ENCODE measurements at regions of chr1 and their contacts with region 1.

Region 1: DNA sequence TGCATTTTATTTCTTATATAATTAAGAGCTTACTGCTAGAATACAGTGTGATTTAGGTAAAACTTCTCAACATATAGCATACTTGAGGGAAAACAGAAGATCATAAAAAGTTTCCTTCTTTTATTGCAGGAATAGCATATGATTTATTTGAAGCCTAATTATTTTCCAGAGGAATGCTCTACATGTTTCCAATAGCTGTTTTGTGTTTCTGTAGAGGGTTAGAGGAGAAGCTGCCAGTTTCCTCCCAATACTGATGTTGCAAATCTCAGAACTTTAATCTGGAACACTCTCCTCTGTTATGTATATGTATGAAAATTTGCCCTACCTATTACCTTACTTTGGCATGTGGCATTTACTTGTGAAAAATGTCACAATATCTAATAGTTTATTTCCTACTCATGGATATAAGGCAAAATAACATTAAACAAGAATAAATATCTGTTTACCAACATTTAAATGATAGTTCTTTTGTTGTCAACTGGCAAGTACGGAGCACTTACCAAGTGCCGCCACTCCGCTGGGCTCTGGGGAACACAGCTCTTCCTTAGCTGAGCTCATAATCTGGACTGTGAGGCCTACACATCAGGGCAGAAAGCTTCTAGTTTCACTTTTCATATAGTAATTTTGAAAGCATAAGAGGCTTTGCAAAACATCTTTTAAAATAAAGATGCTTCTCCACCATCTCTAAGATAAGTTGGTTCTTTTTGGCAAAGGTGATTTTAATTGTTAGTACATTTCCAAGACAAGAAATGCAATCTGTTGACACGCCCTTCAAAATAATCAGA is 239.8 kb upstream of the C1orf105 start:
- DNase-seq: peak; percentile 63
- H3K4me3 Mint-ChIP-seq: peak overlapping the region; percentile 67
- H3K27ac Mint-ChIP-seq: peak overlapping the region; percentile 89
- H3K4me1 Mint-ChIP-seq: peaks cover 40% of the 10 kb centered on the region
- H3K27me3 Mint-ChIP-seq: no peaks in the 10 kb centered on the region

Region 2: GRCh38 chr1:171841050-171841940 is 339.4 kb before region 1 on chr1 and contains the start of gene DNM3:
- CTCF ChIA-PET with region 1: no interaction called
- intact Hi-C with region 1: no loop called
- DNase-seq: peak; percentile 66
- H3K4me3 Mint-ChIP-seq: peak within 1 kb of the TSS; percentile 79
- H3K27ac Mint-ChIP-seq: no peak within 1 kb of the TSS
- H3K4me1 Mint-ChIP-seq: peaks cover 14% of the 10 kb centered on the region
- H3K27me3 Mint-ChIP-seq: peaks cover 13% of the 10 kb centered on the region
- total RNA-seq, gene DNM3: 0.96 to 0.98 TPM

Region 3: DNA sequence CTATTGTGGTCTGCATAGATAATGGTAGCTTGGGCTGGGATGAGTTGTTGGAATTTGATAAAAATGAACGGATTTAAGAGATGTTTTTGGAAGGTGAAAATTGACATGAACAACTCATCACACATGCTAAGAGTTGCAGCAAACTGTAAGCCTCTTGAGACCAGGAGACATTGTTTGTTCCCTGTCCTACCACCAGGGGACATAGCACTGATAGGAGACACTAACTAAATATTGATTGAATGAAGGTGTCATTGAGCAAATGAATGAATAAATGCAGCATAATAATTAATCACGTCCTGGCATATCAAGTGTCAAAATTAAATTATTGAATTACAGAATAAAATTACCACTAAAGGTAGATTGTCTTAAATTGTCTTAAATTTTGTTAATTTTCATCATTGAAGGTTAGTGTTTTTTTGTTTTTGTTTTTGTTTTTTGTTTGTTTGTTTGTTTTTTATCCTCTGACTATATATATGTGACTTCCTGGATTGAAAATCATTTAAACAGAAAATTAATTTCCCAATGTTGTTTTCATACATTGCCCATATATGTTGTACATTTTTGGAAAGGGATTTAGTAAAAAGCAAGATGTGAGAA is 45.5 kb before region 1 on chr1:
- CTCF ChIA-PET with region 1: no interaction called
- intact Hi-C with region 1: loop called (anchors 1 kb)
- DNase-seq: peak; percentile 43
- H3K4me3 Mint-ChIP-seq: no peak overlapping the region
- H3K27ac Mint-ChIP-seq: no peak overlapping the region
- H3K4me1 Mint-ChIP-seq: peaks cover 17% of the 10 kb centered on the region
- H3K27me3 Mint-ChIP-seq: no peaks in the 10 kb centered on the region

Region 4: DNA sequence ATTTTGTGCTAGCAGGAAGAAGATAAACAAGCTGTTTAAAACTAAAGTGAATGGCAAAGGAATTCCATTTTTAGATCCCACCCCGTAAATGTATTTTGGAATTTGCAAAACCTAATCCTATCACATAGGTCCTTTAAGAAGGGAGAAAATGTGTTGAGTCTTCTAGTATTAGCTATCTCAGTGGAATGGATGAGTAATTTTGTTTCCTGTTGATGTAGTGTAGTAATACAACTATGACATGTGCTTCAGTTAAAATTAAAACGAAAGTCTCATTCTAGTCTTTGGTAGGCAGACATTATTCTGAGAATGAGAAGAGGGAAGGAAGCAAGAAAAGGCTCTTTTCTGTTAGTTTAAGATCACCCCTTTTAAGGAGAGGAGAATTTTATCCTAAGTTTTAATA is 26.1 kb before region 1 on chr1:
- CTCF ChIA-PET with region 1: no interaction called
- intact Hi-C with region 1: loop called (anchors 1 kb)
- DNase-seq: no peak
- H3K4me3 Mint-ChIP-seq: no peak overlapping the region
- H3K27ac Mint-ChIP-seq: peak overlapping the region; percentile 82
- H3K4me1 Mint-ChIP-seq: peaks cover 9% of the 10 kb centered on the region
- H3K27me3 Mint-ChIP-seq: no peaks in the 10 kb centered on the region

Region 5: GRCh38 chr1:172220376-172220775 is 39.7 kb after region 1 on chr1:
- CTCF ChIA-PET with region 1: no interaction called
- intact Hi-C with region 1: no loop called
- DNase-seq: no peak
- H3K4me3 Mint-ChIP-seq: no peak overlapping the region
- H3K27ac Mint-ChIP-seq: no peak overlapping the region
- H3K4me1 Mint-ChIP-seq: no peaks in the 10 kb centered on the region
- H3K27me3 Mint-ChIP-seq: no peaks in the 10 kb centered on the region

Region 6: GRCh38 chr1:172269644-172270043 is 89.0 kb after region 1 on chr1:
- CTCF ChIA-PET with region 1: interaction called, 3 read pairs
- intact Hi-C with region 1: loop called (anchors 2 kb)
- DNase-seq: no peak
- H3K4me3 Mint-ChIP-seq: no peak overlapping the region
- H3K27ac Mint-ChIP-seq: peak overlapping the region; percentile 41
- H3K4me1 Mint-ChIP-seq: peaks cover 41% of the 10 kb centered on the region
- H3K27me3 Mint-ChIP-seq: no peaks in the 10 kb centered on the region